T-cell (primary cell): ENCODE measurements at regions of chr12 and their contacts with region 1.

Region 1: DNA sequence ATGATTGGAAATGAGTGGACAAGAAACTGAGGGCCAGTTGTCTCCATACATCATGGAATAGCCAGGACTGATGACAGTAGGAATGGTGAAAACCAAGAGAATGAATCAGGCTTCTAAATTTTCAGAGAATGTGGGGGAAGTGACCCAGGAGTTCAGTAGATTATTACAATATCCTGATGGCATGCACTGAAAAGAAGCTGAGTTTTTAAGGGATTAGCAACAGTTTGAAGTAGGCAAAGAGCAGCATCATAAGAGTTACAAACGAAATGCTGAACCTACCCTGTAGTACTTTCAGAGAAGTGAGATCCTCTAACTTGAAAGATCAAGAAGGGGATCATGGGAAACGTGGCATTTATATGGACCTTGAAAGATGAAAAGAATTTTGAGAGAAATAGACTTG is 13.2 kb downstream of the SLC2A14 start:
- DNase-seq: no peak
- ATAC-seq: peak in 1 of 4 experiments; percentile 13
- H3K4me3 ChIP-seq: no peak overlapping the region
- H3K4me3 Mint-ChIP-seq: no peak overlapping the region
- H3K27ac ChIP-seq: no peak overlapping the region
- H3K27ac Mint-ChIP-seq: no peak overlapping the region
- H3K4me1 ChIP-seq: peaks cover 0 to 15% of the 10 kb centered on the region in 2 experiments
- H3K4me1 Mint-ChIP-seq: peaks cover 7 to 11% (median 10%) of the 10 kb centered on the region in 3 donors
- H3K27me3 ChIP-seq: peaks cover 0 to 9% of the 10 kb centered on the region in 2 experiments
- H3K27me3 Mint-ChIP-seq: peaks cover 0 to 6% of the 10 kb centered on the region in 2 donors

Region 2: DNA sequence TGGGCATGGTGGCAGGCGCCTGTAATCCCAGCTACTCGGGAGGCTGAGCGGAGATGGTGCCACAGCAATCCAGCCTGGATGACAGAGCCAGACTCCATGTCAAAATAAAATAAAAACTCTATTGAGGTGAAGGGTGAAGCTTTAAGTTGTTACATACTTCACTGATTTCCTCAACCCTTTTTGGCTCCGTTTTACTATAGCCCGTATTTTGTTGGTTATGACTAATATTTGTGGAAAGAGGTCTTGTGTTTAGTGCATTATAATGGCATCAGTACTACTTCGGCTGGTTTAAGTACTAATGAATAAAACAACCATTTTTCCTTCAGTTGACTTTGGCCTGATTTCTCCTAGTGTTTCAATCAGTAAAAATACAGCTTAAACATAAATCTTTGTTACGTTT is 40.2 kb after region 1 on chr12:
- CTCF ChIA-PET with region 1: interaction called in 1 of 2 experiments, 10 read pairs
- POLR2A ChIA-PET with region 1: no interaction called
- DNase-seq: no peak
- ATAC-seq: no peak
- H3K4me3 ChIP-seq: no peak overlapping the region
- H3K4me3 Mint-ChIP-seq: no peak overlapping the region
- H3K27ac ChIP-seq: no peak overlapping the region
- H3K27ac Mint-ChIP-seq: no peak overlapping the region
- H3K4me1 ChIP-seq: no peaks in the 10 kb centered on the region
- H3K4me1 Mint-ChIP-seq: no peaks in the 10 kb centered on the region
- H3K27me3 ChIP-seq: no peaks in the 10 kb centered on the region
- H3K27me3 Mint-ChIP-seq: no peaks in the 10 kb centered on the region